Activated T-helper 1 cell treated with anti-CD3 and anti-CD28 coated beads, Interleukin-12 subunit alpha, Interleukin-12 subunit beta, Interleukin-2, Interleukin-4 antibody, amounts not matched to agents 30 ng/mL and 10 ng/mL and 1 ng/mL, durations not matched to agents 14 hours and 24 hours and 36 hours (primary cell): ENCODE measurements at regions of chr4 and their contacts with region 1.

Region 1: GRCh38 chr4:85084380-85085094 is 118.0 kb upstream of the WDFY3 start:
- DNase-seq: no peak
- H3K4me3 Mint-ChIP-seq: no peak overlapping the region
- H3K27ac Mint-ChIP-seq: no peak overlapping the region
- H3K4me1 Mint-ChIP-seq: no peaks in the 10 kb centered on the region
- H3K27me3 Mint-ChIP-seq: no peaks in the 10 kb centered on the region

Region 2: DNA sequence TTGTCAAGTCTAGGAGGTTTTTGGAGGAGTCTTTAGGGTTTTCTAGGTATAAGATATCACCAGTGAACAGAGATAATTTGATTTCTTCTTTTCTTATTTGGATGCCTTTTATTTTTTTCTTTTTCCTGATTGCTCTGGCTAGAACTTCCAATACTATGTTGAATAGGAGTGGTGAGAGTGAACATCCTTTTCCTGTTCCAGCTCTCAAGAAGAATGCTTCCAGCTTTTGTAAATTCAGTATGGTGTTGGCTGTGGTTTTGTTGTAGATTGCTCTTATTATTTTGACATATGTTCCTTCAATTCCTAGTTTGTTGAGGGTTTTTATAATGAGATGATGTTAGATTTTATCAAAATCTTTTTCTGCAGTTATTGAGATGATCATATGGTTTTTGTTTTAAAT is 47.6 kb after region 1 on chr4:
- intact Hi-C with region 1: no loop called
- DNase-seq: no peak
- H3K4me3 Mint-ChIP-seq: no peak overlapping the region
- H3K27ac Mint-ChIP-seq: no peak overlapping the region
- H3K4me1 Mint-ChIP-seq: no peaks in the 10 kb centered on the region
- H3K27me3 Mint-ChIP-seq: no peaks in the 10 kb centered on the region

Region 3: GRCh38 chr4:85370430-85371032 is 286.0 kb after region 1 on chr4:
- intact Hi-C with region 1: no loop called
- DNase-seq: no peak
- H3K4me3 Mint-ChIP-seq: no peak overlapping the region
- H3K27ac Mint-ChIP-seq: no peak overlapping the region
- H3K4me1 Mint-ChIP-seq: no peaks in the 10 kb centered on the region
- H3K27me3 Mint-ChIP-seq: no peaks in the 10 kb centered on the region

Region 4: GRCh38 chr4:85747882-85748491 is 663.5 kb after region 1 on chr4:
- intact Hi-C with region 1: loop called (anchors 1 kb)
- DNase-seq: no peak
- H3K4me3 Mint-ChIP-seq: no peak overlapping the region
- H3K27ac Mint-ChIP-seq: no peak overlapping the region
- H3K4me1 Mint-ChIP-seq: no peaks in the 10 kb centered on the region
- H3K27me3 Mint-ChIP-seq: no peaks in the 10 kb centered on the region